K562 (cell line): ENCODE measurements at regions of chr15 and their contacts with region 1.

Region 1: DNA sequence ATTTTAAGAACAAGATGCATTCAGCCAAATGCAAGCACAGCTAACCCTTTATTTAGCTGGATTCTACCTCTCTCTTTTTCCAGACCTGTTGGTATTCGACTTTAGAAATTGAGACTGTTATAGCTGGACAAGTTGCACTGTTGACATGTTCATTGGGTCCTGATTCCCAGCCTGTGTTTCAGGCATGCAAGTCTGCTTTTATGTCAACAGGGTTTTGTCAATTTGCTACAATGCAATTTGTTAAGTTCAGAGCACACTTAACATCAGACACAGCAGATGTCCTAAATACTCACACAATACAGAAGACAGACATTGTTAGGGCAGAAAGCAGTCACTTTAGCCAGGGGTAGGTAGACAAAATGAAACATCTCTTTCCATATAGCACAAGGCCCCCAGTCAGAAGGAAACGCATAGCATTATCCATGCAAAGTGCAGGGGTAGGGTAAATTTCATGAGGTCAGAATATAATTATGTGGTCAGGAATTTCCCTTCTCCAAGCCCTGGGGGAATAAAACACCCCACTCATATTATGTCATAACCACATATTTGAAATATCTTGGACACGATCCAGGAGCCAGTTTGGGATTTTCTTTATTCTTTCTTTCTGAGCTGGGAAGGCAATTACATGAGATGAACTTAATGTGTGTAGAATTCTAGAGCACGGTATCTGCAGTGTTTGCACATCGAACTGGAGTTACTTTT is 504.1 kb downstream of the NTRK3 start:
- DNase-seq: no peak
- ATAC-seq: no peak; the same call in 1 of the 3 replicates
- H3K4me3 ChIP-seq: no peak overlapping the region
- H3K27ac ChIP-seq: no peak overlapping the region
- H3K4me1 ChIP-seq: peaks cover 3 to 18% of the 10 kb centered on the region in 2 experiments; a peak in 3 of 5 replicates
- H3K27me3 ChIP-seq: no peaks in the 10 kb centered on the region
- CTCF ChIP-seq: no peak
- EP300 ChIP-seq: no peak
- POLR2A ChIP-seq: no peak
- RAD21 ChIP-seq: no peak

Region 2: DNA sequence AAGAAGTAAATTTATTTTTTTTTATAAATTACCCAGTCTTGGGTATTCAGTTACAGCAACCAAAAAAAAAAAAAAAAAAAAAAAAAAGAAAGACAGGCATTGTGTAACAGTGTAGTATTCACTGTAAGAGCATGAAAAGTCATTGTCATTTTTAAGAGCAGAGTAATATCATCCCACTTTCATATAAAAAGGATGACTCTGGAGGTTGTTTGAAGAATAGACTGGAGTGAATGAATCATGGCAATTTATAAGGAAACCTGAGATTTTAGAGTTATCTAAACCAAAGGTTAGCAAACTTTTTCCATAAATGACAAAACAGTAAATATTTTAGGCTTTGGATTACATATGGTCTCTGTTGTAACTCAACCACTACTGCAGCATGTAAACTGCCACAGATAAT is 290.8 kb before region 1 on chr15:
- CTCF ChIA-PET with region 1: no interaction called
- POLR2A ChIA-PET with region 1: no interaction called
- in situ Hi-C with region 1: no loop called
- intact Hi-C with region 1: no loop called
- DNase-seq: no peak
- ATAC-seq: no peak
- H3K4me3 ChIP-seq: no peak overlapping the region
- H3K27ac ChIP-seq: no peak overlapping the region
- H3K4me1 ChIP-seq: no peaks in the 10 kb centered on the region
- H3K27me3 ChIP-seq: no peaks in the 10 kb centered on the region
- CTCF ChIP-seq: no peak
- EP300 ChIP-seq: no peak
- POLR2A ChIP-seq: no peak
- RAD21 ChIP-seq: no peak

Region 3: GRCh38 chr15:87604857-87605446 is 147.4 kb before region 1 on chr15:
- CTCF ChIA-PET with region 1: interaction called, 3 read pairs
- POLR2A ChIA-PET with region 1: no interaction called
- in situ Hi-C with region 1: no loop called
- intact Hi-C with region 1: loop called (anchors 5 kb)
- DNase-seq: peak; percentile 37 to 41 (median 38)
- ATAC-seq: 0 out of 3 replicates have a peak, but pooled peaks have one; percentile 51
- H3K4me3 ChIP-seq: no peak overlapping the region
- H3K27ac ChIP-seq: no peak overlapping the region
- H3K4me1 ChIP-seq: peaks cover 5 to 20% of the 10 kb centered on the region in 2 experiments
- H3K27me3 ChIP-seq: no peaks in the 10 kb centered on the region
- CTCF ChIP-seq: peak; percentile 44 to 53 (median 45); a peak in 5 of 6 replicates
- EP300 ChIP-seq: no peak
- POLR2A ChIP-seq: no peak
- RAD21 ChIP-seq: peak in 1 of 2 experiments; percentile 32; a peak in 2 of 4 replicates

Region 4: DNA sequence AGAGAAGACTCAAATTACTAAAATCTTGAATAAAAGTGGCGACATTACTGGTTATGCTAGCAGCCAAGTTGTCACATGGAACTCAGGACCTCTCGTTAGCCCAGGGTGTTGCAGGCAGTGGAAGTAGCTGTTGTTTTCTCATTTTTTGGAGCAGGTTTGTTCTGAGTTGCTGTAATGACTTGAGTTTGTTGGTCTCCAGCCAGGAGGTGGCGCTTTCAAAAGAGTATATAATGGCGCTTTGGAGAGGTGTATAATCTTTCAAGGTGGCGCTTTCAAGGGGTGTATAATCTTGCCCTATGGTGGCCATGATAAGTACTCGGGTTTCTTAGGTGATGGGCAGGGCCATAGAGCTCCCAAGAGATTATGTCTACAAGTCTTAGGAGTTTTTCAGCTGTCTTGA is 128.6 kb before region 1 on chr15:
- CTCF ChIA-PET with region 1: no interaction called
- POLR2A ChIA-PET with region 1: no interaction called
- in situ Hi-C with region 1: no loop called
- intact Hi-C with region 1: loop called (anchors 5 kb)
- DNase-seq: peak; percentile 31 to 85 (median 44)
- ATAC-seq: peak; percentile 89
- H3K4me3 ChIP-seq: no peak overlapping the region
- H3K27ac ChIP-seq: peak overlapping the region; percentile 54; the same call in 2 of the 3 replicates
- H3K4me1 ChIP-seq: peaks cover 12 to 33% of the 10 kb centered on the region in 2 experiments; a peak in 4 of 5 replicates
- H3K27me3 ChIP-seq: no peaks in the 10 kb centered on the region
- CTCF ChIP-seq: peak; percentile 58 to 67 (median 61)
- EP300 ChIP-seq: peak; percentile 17; the same call in 1 of the 2 replicates
- POLR2A ChIP-seq: no peak
- RAD21 ChIP-seq: peak; percentile 19 to 46; a peak in 2 of 4 replicates

Region 5: GRCh38 chr15:87777054-87777561 is 24.7 kb after region 1 on chr15:
- CTCF ChIA-PET with region 1: no interaction called
- POLR2A ChIA-PET with region 1: no interaction called
- in situ Hi-C with region 1: no loop called
- intact Hi-C with region 1: no loop called
- DNase-seq: peak in 1 of 4 experiments; percentile 20
- ATAC-seq: no peak; the same call in 2 of the 3 replicates
- H3K4me3 ChIP-seq: no peak overlapping the region
- H3K27ac ChIP-seq: no peak overlapping the region
- H3K4me1 ChIP-seq: no peaks in the 10 kb centered on the region
- H3K27me3 ChIP-seq: peaks cover 0 to 15% of the 10 kb centered on the region in 2 experiments; a peak in 4 of 5 replicates
- CTCF ChIP-seq: no peak
- EP300 ChIP-seq: no peak
- POLR2A ChIP-seq: no peak
- RAD21 ChIP-seq: no peak